ENCODE measurements at regions of chr18 and their contacts with region 1.

Region 1: DNA sequence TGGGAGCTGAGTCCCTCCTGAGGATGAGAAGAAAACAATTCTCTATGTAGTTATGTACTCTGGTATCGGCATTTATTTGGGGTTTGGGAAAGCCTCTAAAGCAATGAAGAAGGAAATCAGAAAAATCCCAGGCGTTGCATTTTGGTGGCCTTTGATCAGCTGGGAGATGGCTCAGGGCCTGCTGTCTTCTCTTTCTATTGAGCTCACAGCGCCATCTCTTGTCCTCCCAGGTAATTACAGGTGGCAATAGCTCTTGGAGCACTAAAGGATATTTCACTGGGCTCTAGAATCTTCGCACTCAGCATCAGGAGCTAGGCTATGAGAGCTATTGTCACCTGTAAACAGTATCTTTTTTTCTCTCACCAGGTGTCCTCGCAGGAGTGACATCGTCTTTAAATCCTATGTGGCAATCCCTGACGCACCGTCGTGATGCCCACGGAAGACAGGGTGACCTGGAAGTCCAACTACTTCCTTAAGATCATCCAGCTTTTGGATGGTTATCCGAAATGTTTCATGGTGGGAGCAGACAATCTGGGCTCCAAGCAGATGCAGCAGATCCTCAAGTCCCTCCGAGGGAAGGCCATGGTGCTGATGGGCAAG is 76.1 kb upstream of the PMAIP1 start:
- DNase-seq: no peak
- H3K4me3 ChIP-seq: no peak overlapping the region
- H3K27me3 ChIP-seq: no peaks in the 10 kb centered on the region
- CTCF ChIP-seq: peak; percentile 85

Region 2: GRCh38 chr18:59402432-59403090 is 421.1 kb before region 1 on chr18:
- CTCF ChIA-PET with region 1: interaction called, 14 read pairs
- POLR2A ChIA-PET with region 1: no interaction called
- DNase-seq: peak; percentile 4
- H3K4me3 ChIP-seq: no peak overlapping the region
- H3K27me3 ChIP-seq: no peaks in the 10 kb centered on the region
- CTCF ChIP-seq: peak; percentile 99

Region 3: GRCh38 chr18:59459369-59460079 is 364.2 kb before region 1 on chr18:
- CTCF ChIA-PET with region 1: interaction called, 100 read pairs
- POLR2A ChIA-PET with region 1: no interaction called
- DNase-seq: no peak
- H3K4me3 ChIP-seq: no peak overlapping the region
- H3K27me3 ChIP-seq: no peaks in the 10 kb centered on the region
- CTCF ChIP-seq: peak; percentile 54

Region 4: DNA sequence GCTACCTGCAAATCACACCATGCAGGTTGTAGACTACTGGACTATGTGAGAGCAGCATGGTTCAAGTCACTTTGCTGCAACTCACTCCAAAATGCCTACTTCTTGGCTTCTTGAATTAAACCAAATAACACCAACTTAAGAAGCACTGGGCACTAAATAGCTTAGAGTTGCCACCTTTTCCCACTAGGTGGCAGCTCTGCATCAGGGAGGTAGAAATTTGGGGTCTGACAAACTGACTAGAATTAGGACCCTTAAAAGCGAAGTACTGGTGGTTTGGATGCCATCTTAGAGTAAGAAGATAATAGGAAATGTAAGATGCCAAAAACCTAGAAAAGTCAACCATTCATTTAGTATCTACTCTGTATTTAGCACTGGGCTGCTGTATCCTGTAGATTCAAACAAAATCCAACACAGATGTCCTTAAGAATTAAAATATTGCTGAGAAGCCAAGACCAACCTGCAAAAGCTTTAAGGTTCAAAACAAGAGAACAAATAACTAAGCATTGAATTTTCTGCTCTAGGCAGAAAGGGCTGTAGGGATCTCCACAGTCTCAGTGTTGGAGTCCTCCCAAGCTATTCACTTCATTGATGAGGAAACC is 192.0 kb before region 1 on chr18:
- CTCF ChIA-PET with region 1: interaction called, 89 read pairs
- POLR2A ChIA-PET with region 1: interaction called, 3 read pairs
- DNase-seq: no peak
- H3K4me3 ChIP-seq: no peak overlapping the region
- H3K27me3 ChIP-seq: no peaks in the 10 kb centered on the region
- CTCF ChIP-seq: peak; percentile 84

Region 5: DNA sequence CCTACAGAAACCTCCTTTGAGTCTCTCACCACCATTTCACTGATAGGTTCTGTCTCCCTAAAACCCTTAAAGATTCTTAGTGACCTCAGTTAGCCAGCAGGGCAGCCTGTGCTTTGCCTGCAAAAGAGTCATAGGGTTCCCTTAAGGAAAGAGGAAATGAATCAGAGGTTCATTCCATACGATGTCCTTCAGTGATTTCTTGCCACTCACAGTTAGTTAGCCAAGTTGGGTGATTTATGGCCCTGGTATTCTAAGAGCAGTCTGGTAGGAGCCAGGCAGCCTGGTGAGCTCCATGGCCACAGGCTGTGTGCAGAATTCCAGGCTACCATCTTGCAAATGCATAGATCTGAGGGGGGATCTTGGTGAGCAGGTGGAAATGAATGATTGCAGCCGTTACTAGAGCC is 107.7 kb before region 1 on chr18:
- CTCF ChIA-PET with region 1: interaction called, 26 read pairs
- POLR2A ChIA-PET with region 1: interaction called, 3 read pairs
- DNase-seq: no peak
- H3K4me3 ChIP-seq: no peak overlapping the region
- H3K27me3 ChIP-seq: no peaks in the 10 kb centered on the region
- CTCF ChIP-seq: peak; percentile 12; the same call in 1 of the 2 replicates

Region 6: GRCh38 chr18:59787998-59788790 is 35.5 kb before region 1 on chr18:
- CTCF ChIA-PET with region 1: interaction called, 41 read pairs
- POLR2A ChIA-PET with region 1: no interaction called
- DNase-seq: no peak
- H3K4me3 ChIP-seq: no peak overlapping the region
- H3K27me3 ChIP-seq: no peaks in the 10 kb centered on the region
- CTCF ChIP-seq: no peak

Region 7: DNA sequence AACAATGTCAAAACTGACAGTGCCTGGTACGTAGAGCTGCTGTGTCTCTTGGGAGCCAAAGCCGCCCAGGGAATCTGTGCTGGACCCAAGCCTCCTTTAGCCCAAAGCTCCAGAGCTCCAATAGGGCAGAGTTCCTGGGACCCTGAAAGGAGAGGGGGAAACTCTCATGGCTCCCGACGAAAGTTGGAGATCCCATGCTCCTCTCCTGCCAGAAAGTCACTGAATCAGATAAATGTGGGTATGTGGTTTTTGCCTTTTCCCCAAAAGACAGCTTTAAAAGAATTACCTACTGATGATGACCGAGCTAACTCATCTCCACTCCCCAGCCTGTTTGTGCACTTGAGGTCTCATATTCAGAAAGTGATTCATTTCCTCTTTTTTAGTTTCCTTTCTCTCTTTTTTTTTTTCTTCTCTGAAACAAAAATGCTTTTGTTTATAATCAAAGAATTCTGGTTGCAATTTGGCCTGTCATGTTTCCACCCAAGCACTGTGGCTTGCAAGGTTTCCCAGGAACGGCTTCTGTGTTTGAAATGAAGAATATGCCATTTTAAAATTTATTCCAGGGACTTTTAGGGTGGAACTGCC is 62.0 kb after region 1 on chr18:
- CTCF ChIA-PET with region 1: no interaction called
- POLR2A ChIA-PET with region 1: no interaction called
- DNase-seq: no peak
- H3K4me3 ChIP-seq: no peak overlapping the region
- H3K27me3 ChIP-seq: no peaks in the 10 kb centered on the region
- CTCF ChIP-seq: no peak

Measured in BJ (cell line).